Cardiac septum (tissue), 1 donor: ENCODE measurements at regions of chr4 and their contacts with region 1.

Region 1: GRCh38 chr4:83535520-83536361 is at the start of gene GPAT3:
- DNase-seq: peak; percentile 95
- total RNA-seq, gene GPAT3: 38.5 TPM

Region 2: DNA sequence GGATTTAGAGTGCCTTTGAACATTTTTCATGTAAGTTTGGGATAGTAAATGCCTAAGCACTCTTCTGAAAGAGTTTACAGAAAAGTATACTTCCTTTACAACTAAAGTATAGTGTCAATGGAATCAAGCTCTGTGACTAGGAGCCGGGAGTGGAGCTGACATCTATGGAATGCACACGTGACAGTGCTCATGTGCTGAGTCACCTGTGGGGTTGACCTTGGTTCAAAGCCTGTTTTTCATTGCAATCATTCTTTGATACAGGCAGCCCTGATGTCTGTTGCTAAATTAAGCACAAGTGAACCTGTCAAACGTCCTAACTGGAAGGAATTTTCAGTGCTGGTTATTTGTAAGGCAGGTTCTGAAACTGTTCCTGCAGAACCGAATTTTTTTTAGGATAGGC is 82.7 kb after region 1 on chr4:
- intact Hi-C with region 1: loop called (anchors 2 kb)
- DNase-seq: no peak